Activated CD8-positive, alpha-beta T cell treated with anti-CD3 and anti-CD28 coated beads for 36 hours (primary cell): ENCODE measurements at regions of chr7 and their contacts with region 1.

Region 1: DNA sequence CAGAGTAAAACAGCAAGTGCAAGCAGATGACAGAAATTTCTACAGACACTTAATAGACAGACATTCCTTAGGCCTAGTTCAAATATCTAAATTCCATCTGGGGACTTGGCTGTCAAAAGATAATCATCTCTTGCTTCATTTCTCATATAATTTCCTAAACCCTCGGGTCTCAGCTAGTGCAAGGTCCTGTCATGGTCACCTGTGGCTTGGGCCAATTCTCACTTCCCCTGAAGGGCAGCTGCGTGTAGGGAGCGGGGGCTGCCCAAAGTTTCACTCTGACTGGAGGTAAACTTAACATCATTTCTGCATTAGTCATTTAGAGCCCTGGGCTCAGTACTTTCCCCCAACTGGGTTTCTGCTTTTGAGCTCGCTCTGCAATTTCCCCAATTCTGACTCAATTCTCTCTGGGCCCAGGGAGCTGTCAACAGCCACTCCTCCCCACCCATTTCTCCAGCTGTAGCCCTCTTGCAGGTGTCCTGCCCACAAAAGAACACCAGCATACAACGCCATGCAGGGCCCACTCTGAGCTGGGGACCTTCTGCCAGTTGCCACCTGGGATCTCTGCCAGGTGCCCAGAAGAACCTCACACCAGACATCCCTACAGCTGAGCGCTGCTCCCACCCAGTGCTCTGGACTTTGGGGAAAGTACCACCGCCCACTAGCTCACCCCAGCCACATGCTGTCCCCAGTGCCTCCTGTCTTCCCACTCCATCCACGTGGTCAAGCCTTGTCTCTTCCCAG is 38.0 kb downstream of the VOPP1 start:
- DNase-seq: peak; percentile 91
- ATAC-seq: peak; percentile 65
- H3K4me3 Mint-ChIP-seq: peak overlapping the region; percentile 43
- H3K27ac Mint-ChIP-seq: peak overlapping the region; percentile 95
- H3K4me1 Mint-ChIP-seq: peaks cover 92% of the 10 kb centered on the region
- H3K27me3 Mint-ChIP-seq: no peaks in the 10 kb centered on the region
- CTCF ChIP-seq: no peak

Region 2: DNA sequence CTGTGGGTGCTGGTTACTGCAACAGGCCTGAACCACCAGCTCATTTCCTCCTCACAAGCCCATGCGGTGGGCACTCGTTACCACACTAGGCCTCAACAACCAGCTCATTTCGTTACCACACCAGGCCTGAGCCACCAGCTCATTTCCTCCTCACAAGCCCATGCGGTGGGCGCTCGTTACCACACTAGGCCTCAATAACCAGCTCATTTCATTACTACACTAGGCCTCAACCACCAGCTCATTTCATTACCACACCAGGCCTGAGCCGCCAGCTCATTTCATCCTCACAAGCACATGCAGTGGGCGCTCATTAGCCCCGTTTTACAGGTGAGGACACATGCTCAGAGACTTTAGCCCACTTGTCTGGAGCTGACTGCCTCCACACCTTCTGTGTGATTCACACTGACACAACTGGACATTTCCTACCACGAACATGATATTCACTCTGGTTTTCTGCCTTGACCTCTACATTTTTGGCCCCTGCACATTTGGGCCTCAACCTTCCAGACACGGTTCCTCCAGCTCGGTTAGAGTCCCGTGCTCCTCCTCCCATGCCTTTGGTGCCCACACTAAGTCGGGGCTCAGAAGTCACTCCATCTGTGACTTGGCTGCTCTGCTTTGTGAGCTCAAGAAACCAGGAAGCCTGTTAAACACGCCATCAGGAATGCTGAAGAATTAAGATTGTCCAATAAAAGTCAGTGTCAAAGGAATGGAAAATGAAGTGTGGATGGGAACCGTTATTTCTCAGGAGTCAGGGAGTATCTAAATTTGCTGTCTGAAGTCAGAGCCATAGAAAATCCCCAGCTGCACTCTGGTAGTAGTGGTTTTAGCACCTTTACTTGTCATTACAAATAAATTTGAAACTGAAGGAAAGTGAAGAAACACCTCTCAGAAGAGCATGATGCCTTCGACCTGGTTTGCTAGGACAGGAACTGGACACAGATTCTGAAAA is 225.0 kb before region 1 on chr7:
- CTCF ChIA-PET with region 1: interaction called, 7 read pairs
- POLR2A ChIA-PET with region 1: interaction called, 13 read pairs
- intact Hi-C with region 1: no loop called
- DNase-seq: peak; percentile 94
- ATAC-seq: peak; percentile 88
- H3K4me3 Mint-ChIP-seq: peak overlapping the region; percentile 12
- H3K27ac Mint-ChIP-seq: peak overlapping the region; percentile 86
- H3K4me1 Mint-ChIP-seq: peaks cover 28% of the 10 kb centered on the region
- H3K27me3 Mint-ChIP-seq: peaks cover 11% of the 10 kb centered on the region
- CTCF ChIP-seq: no peak

Region 3: DNA sequence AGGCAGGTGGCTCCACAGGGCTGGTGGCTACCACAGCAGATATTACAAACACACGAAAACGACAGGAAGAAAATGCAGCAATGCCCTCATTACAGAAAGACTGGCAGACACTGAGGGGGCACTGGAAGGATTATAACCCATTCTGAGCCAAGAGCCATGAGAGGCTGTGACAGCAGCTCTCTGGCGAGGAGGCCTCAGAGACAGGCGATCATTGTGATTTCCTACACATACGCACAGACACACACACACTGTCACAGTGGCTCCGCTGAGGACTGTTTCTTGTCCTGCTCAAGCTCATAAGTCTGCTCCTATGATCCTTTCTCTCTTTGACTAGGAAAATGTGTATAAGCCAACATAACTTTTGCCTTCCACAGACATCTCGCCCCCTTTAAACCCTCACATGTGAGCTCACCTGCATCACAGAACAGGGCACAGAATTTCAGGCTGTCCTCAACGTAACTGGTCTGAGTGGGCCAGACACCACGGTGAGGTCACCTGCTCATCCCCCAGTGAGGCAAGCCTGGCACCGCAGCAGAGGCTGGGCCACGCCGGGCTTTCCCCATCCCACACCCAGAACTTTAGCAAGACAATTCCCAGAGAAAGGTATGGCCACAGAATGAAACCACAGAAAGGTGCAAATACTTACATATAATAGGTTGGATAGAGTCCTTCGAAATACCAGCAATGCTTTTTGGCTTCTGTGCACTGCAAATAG is 13.8 kb before region 1 on chr7:
- CTCF ChIA-PET with region 1: interaction called, 5 read pairs
- POLR2A ChIA-PET with region 1: interaction called, 10 read pairs
- intact Hi-C with region 1: no loop called
- DNase-seq: no peak
- ATAC-seq: no peak
- H3K4me3 Mint-ChIP-seq: no peak overlapping the region
- H3K27ac Mint-ChIP-seq: no peak overlapping the region
- H3K4me1 Mint-ChIP-seq: peaks cover 53% of the 10 kb centered on the region
- H3K27me3 Mint-ChIP-seq: no peaks in the 10 kb centered on the region
- CTCF ChIP-seq: no peak

Region 4: DNA sequence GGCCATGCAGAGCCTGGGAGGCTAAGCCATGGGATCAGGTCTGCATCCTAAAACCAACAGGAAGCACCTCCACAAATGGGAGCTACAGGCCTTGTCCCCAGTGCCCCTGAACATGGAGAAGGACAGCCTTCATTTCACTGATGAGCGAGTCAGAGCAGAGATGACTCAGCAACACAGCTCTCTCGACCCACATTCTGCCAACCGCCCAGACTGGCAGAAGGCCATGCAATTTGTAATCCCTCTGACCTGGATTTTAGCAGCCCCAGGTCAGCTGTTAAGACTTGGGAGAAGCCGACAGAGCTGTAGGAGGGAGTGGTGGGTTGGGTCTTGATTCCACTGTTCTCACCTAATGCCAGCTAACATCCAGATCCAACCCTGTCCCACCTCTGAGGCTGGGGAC is 12.5 kb after region 1 on chr7:
- CTCF ChIA-PET with region 1: interaction called, 14 read pairs
- POLR2A ChIA-PET with region 1: interaction called, 6 read pairs
- intact Hi-C with region 1: no loop called
- DNase-seq: peak; percentile 67
- ATAC-seq: peak; percentile 89
- H3K4me3 Mint-ChIP-seq: no peak overlapping the region
- H3K27ac Mint-ChIP-seq: no peak overlapping the region
- H3K4me1 Mint-ChIP-seq: peaks cover 73% of the 10 kb centered on the region
- H3K27me3 Mint-ChIP-seq: no peaks in the 10 kb centered on the region
- CTCF ChIP-seq: no peak

Region 5: GRCh38 chr7:55557666-55558188 is 23.4 kb after region 1 on chr7:
- CTCF ChIA-PET with region 1: interaction called, 5 read pairs
- POLR2A ChIA-PET with region 1: interaction called, 14 read pairs
- intact Hi-C with region 1: loop called (anchors 2 kb)
- DNase-seq: peak; percentile 66
- ATAC-seq: peak; percentile 83
- H3K4me3 Mint-ChIP-seq: peak overlapping the region; percentile 1
- H3K27ac Mint-ChIP-seq: peak overlapping the region; percentile 67
- H3K4me1 Mint-ChIP-seq: peaks cover 91% of the 10 kb centered on the region
- H3K27me3 Mint-ChIP-seq: no peaks in the 10 kb centered on the region
- CTCF ChIP-seq: no peak

Region 6: GRCh38 chr7:55565681-55566080 is 31.3 kb after region 1 on chr7:
- CTCF ChIA-PET with region 1: interaction called, 10 read pairs
- POLR2A ChIA-PET with region 1: interaction called, 163 read pairs
- intact Hi-C with region 1: no loop called
- DNase-seq: peak; percentile 28
- ATAC-seq: no peak
- H3K4me3 Mint-ChIP-seq: peak overlapping the region; percentile 4
- H3K27ac Mint-ChIP-seq: peak overlapping the region; percentile 36
- H3K4me1 Mint-ChIP-seq: peaks cover 86% of the 10 kb centered on the region
- H3K27me3 Mint-ChIP-seq: no peaks in the 10 kb centered on the region
- CTCF ChIP-seq: no peak

Region 7: DNA sequence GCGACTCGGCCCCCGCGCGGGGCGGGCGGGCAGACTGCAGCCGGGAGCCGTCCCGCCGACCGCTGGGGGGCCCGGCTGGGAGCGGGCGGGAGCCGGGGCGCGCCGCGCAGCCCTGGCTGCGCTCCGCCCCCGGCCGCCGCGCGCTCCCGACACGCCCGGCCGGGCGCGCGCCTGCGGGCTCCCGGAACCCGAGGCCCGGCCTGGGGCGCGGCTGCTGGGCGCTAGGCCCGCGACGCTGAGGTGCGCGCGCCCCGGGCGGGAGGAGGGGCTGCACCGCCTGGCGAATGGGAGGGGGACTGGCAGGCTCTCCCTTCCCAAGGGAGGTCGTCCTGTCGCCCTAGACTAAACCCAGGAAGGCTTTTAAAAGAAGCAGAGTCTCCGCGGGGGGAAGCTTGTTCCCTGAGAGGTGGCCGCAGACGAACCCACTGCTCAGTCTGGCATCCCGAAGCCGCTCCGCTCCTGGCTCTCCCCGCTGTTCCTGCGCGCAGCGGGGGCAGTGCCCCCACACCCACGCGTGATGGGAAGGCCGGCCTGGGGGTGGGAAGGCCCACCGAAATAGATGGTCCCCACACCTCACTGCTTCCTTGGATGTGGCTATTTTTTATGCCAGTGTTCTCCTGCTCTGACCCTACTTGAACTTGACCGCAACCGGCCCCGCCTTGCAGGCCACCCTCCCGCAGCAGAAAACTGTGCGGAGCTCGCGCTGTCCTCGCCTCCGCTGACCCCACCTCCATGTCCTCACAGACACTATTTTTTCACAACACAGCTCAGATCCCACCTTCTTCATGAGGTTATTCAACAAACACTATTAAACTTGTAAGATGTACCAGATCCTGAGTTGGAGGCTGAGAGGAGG is 38.3 kb after region 1 on chr7 and contains the start of gene VOPP1:
- CTCF ChIA-PET with region 1: interaction called, 21 read pairs
- POLR2A ChIA-PET with region 1: interaction called, 163 read pairs
- intact Hi-C with region 1: loop called (anchors 1 kb)
- DNase-seq: peak; percentile 54
- ATAC-seq: peak; percentile 45
- H3K4me3 Mint-ChIP-seq: peak within 1 kb of the TSS; percentile 87
- H3K27ac Mint-ChIP-seq: peak within 1 kb of the TSS; percentile 95
- H3K4me1 Mint-ChIP-seq: peaks cover 61% of the 10 kb centered on the region
- H3K27me3 Mint-ChIP-seq: no peaks in the 10 kb centered on the region
- CTCF ChIP-seq: no peak
- total RNA-seq, gene VOPP1: 32.6 to 34.7 TPM

Region 8: GRCh38 chr7:55641273-55641691 is 106.9 kb after region 1 on chr7:
- CTCF ChIA-PET with region 1: no interaction called
- POLR2A ChIA-PET with region 1: no interaction called
- intact Hi-C with region 1: no loop called
- DNase-seq: peak; percentile 42
- ATAC-seq: peak; percentile 85
- H3K4me3 Mint-ChIP-seq: no peak overlapping the region
- H3K27ac Mint-ChIP-seq: no peak overlapping the region
- H3K4me1 Mint-ChIP-seq: peaks cover 9% of the 10 kb centered on the region
- H3K27me3 Mint-ChIP-seq: no peaks in the 10 kb centered on the region
- CTCF ChIP-seq: peak; percentile 79